ENCODE measurements at regions of chr21 and their contacts with region 1.

Region 1: GRCh38 chr21:41583274-41583790 is 75.4 kb upstream of the TMPRSS2 start:
- DNase-seq: peak; percentile 75
- ATAC-seq: peak; percentile 88
- H3K4me3 ChIP-seq: peak overlapping the region in 1 of 3 experiments; percentile 29; a peak in 1 of 6 replicates
- H3K27ac ChIP-seq: no peak overlapping the region
- H3K4me1 ChIP-seq: peaks cover 53% of the 10 kb centered on the region
- H3K27me3 ChIP-seq: no peaks in the 10 kb centered on the region
- CTCF ChIP-seq: no peak
- EP300 ChIP-seq: peak in 1 of 2 experiments; percentile 54; a peak in 2 of 4 replicates
- POLR2A ChIP-seq: no peak
- RAD21 ChIP-seq: no peak

Region 2: GRCh38 chr21:41133896-41134522 is 449.3 kb before region 1 on chr21:
- CTCF ChIA-PET with region 1: no interaction called
- POLR2A ChIA-PET with region 1: no interaction called
- in situ Hi-C with region 1: no loop called
- intact Hi-C with region 1: no loop called
- DNase-seq: peak; percentile 49
- ATAC-seq: peak; percentile 85
- H3K4me3 ChIP-seq: no peak overlapping the region
- H3K27ac ChIP-seq: no peak overlapping the region
- H3K4me1 ChIP-seq: no peaks in the 10 kb centered on the region
- H3K27me3 ChIP-seq: peaks cover 1 to 3% of the 10 kb centered on the region in 2 experiments; a peak in 1 of 5 replicates
- CTCF ChIP-seq: peak; percentile 65
- EP300 ChIP-seq: no peak
- POLR2A ChIP-seq: no peak
- RAD21 ChIP-seq: no peak

Region 3: DNA sequence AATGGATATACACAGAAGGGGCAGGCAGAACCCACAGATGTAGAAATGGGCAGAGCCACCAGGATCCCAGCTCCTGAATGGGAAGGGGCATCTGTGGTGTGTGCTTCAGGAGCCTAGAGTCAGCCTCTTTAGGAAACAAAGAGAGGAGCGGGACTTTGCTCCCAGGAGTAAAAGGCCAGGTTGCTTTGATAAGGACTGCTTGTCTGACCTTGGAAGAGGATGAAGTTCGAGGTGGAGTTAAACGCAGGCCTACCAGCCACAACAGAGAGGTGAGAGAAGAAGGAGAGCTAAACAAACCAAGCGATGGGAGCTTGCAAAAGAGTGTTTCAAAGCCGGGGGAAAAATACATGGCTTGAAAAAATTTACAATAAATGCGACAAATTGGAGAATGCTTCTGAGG is 25.4 kb before region 1 on chr21:
- CTCF ChIA-PET with region 1: no interaction called
- POLR2A ChIA-PET with region 1: no interaction called
- in situ Hi-C with region 1: no loop called
- intact Hi-C with region 1: loop called (anchors 1 kb)
- DNase-seq: peak; percentile 18
- ATAC-seq: peak; percentile 67
- H3K4me3 ChIP-seq: no peak overlapping the region
- H3K27ac ChIP-seq: no peak overlapping the region
- H3K4me1 ChIP-seq: peaks cover 28% of the 10 kb centered on the region
- H3K27me3 ChIP-seq: peaks cover 0 to 10% of the 10 kb centered on the region in 2 experiments; a peak in 1 of 5 replicates
- CTCF ChIP-seq: no peak
- EP300 ChIP-seq: peak in 1 of 2 experiments; percentile 13; a peak in 1 of 4 replicates
- POLR2A ChIP-seq: no peak
- RAD21 ChIP-seq: no peak

Measured in HepG2 (cell line).